Caco-2 (cell line): ENCODE measurements at regions of chrX and their contacts with region 1.

Region 1: GRCh38 chrX:119516157-119516702 is 48.0 kb downstream of the SLC25A5 start:
- DNase-seq: peak in 1 of 2 experiments; percentile 51
- H3K4me3 ChIP-seq: no peak overlapping the region
- H3K4me3 Mint-ChIP-seq: no peak overlapping the region
- H3K27ac Mint-ChIP-seq: no peak overlapping the region
- H3K4me1 ChIP-seq: no peaks in the 10 kb centered on the region
- H3K4me1 Mint-ChIP-seq: peaks cover 13% of the 10 kb centered on the region
- H3K27me3 ChIP-seq: no peaks in the 10 kb centered on the region
- H3K27me3 Mint-ChIP-seq: no peaks in the 10 kb centered on the region
- CTCF ChIP-seq: peak; percentile 59 to 79

Region 2: DNA sequence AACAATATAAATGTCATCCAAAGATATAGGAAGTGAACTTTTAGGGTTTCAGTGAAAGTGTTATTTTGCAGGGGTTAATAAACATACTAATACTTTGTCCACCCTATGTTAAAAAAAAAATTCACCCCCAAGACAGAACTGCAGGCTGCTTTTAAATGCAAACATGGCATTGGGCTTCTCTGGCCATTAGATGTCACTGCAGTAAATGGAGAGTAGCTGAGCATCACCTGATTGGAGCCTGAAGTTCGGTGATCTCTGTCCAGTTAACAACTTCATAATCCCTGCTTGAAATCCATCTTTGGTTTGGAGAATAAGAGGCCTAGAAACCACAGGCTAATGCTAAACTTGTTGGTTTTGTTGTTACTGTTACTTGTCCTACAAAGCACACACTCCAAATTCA is 98.4 kb before region 1 on chrX:
- CTCF ChIA-PET with region 1: interaction called, 16 read pairs
- POLR2A ChIA-PET with region 1: no interaction called
- intact Hi-C with region 1: loop called (anchors 2 kb)
- DNase-seq: peak in 1 of 2 experiments; percentile 11
- H3K4me3 ChIP-seq: no peak overlapping the region
- H3K4me3 Mint-ChIP-seq: no peak overlapping the region
- H3K27ac Mint-ChIP-seq: no peak overlapping the region
- H3K4me1 ChIP-seq: peaks cover 12% of the 10 kb centered on the region; the same call in 1 of the 2 replicates
- H3K4me1 Mint-ChIP-seq: peaks cover 14% of the 10 kb centered on the region
- H3K27me3 ChIP-seq: no peaks in the 10 kb centered on the region
- H3K27me3 Mint-ChIP-seq: no peaks in the 10 kb centered on the region
- CTCF ChIP-seq: peak in 1 of 2 experiments; percentile 44

Region 3: DNA sequence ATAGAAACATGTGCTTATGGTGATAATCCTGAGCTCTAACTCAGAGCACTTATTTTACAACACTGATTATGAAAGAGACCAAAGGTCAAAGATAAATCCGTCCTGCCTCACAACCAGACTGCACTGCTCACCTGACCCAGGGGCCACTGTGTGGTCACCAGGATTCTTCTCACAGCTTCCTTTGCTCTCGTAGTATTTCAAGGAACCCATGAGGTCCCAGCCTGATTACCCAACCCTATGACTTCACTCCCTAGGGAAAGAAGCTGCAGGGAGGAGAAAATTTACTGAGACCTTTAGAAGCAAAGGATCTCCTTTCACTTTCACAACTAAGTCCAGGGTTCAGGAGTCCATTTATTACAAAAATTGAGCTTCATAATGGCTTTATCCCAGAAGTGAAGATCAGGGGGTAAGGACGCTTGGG is 38.4 kb before region 1 on chrX:
- CTCF ChIA-PET with region 1: interaction called, 25 read pairs
- POLR2A ChIA-PET with region 1: interaction called, 3 read pairs
- intact Hi-C with region 1: no loop called
- DNase-seq: peak; percentile 86 to 92
- H3K4me3 ChIP-seq: no peak overlapping the region
- H3K4me3 Mint-ChIP-seq: peak overlapping the region; percentile 65
- H3K27ac Mint-ChIP-seq: peak overlapping the region; percentile 90
- H3K4me1 ChIP-seq: peaks cover 21% of the 10 kb centered on the region
- H3K4me1 Mint-ChIP-seq: peaks cover 12% of the 10 kb centered on the region
- H3K27me3 ChIP-seq: no peaks in the 10 kb centered on the region
- H3K27me3 Mint-ChIP-seq: no peaks in the 10 kb centered on the region
- CTCF ChIP-seq: no peak

Region 4: DNA sequence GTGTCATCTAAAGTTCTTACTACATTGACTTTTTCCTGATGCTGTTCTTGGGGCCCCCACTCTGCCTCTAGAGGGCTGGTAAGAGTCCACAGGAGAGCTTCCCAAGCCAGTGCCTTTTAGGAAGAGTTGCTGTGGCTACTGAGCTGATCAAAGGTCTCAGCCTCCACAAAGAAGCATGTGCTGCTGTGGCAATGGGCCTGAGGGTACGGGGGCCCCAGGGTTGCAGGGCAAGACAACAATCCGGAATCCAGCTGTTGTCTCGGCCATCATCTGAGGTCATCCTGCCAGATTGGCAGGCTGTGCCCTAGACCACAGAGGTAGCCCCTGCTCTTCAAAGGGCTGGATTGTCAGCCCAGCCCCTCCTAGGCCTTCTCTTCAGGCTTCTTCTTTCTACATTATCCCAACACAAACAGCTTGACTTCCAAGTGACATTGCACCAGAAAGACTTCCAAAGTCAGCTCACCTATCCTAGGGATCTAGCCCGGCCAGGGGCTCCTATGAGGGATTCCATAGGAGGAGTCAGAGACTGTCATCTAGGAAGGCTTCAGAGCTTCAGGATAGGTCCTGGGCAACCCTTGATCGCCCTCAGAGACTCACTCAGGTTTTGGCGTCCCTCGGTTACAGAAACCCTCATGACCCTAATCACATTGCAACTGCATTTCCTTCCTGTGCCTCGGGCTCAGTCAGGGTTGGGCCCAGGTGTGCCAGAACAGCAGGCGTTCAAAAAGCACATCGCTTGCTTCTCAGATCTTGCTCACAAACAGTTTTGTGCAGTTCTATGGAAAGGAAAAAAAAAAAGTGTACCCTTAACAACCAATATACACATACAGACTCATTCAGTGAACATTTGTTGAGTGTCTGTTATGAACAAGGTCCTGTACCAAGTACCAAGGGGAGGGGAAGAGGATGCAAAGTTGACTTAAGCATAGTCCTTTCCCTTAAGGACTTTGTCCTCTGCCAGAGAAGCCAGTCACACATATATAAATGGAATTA is 20.2 kb before region 1 on chrX:
- CTCF ChIA-PET with region 1: interaction called, 15 read pairs
- POLR2A ChIA-PET with region 1: no interaction called
- intact Hi-C with region 1: no loop called
- DNase-seq: peak; percentile 56 to 67
- H3K4me3 ChIP-seq: no peak overlapping the region
- H3K4me3 Mint-ChIP-seq: no peak overlapping the region
- H3K27ac Mint-ChIP-seq: peak overlapping the region; percentile 82
- H3K4me1 ChIP-seq: peaks cover 23% of the 10 kb centered on the region
- H3K4me1 Mint-ChIP-seq: peaks cover 15% of the 10 kb centered on the region
- H3K27me3 ChIP-seq: no peaks in the 10 kb centered on the region
- H3K27me3 Mint-ChIP-seq: no peaks in the 10 kb centered on the region
- CTCF ChIP-seq: peak in 1 of 2 experiments; percentile 21

Region 5: GRCh38 chrX:119541188-119541587 is 25.0 kb after region 1 on chrX:
- CTCF ChIA-PET with region 1: no interaction called
- POLR2A ChIA-PET with region 1: no interaction called
- intact Hi-C with region 1: no loop called
- DNase-seq: no peak
- H3K4me3 ChIP-seq: no peak overlapping the region
- H3K4me3 Mint-ChIP-seq: no peak overlapping the region
- H3K27ac Mint-ChIP-seq: no peak overlapping the region
- H3K4me1 ChIP-seq: no peaks in the 10 kb centered on the region
- H3K4me1 Mint-ChIP-seq: no peaks in the 10 kb centered on the region
- H3K27me3 ChIP-seq: no peaks in the 10 kb centered on the region
- H3K27me3 Mint-ChIP-seq: no peaks in the 10 kb centered on the region
- CTCF ChIP-seq: no peak

Region 6: GRCh38 chrX:119606280-119607015 is 90.2 kb after region 1 on chrX and contains the start of gene NKRF:
- CTCF ChIA-PET with region 1: interaction called, 4 read pairs
- POLR2A ChIA-PET with region 1: no interaction called
- intact Hi-C with region 1: loop called (anchors 10 kb)
- DNase-seq: peak; percentile 90 to 91
- H3K4me3 ChIP-seq: peak within 1 kb of the TSS; percentile 95
- H3K4me3 Mint-ChIP-seq: peak within 1 kb of the TSS; percentile 94
- H3K27ac Mint-ChIP-seq: peak within 1 kb of the TSS; percentile 94
- H3K4me1 ChIP-seq: no peaks in the 10 kb centered on the region
- H3K4me1 Mint-ChIP-seq: no peaks in the 10 kb centered on the region
- H3K27me3 ChIP-seq: no peaks in the 10 kb centered on the region
- H3K27me3 Mint-ChIP-seq: no peaks in the 10 kb centered on the region
- CTCF ChIP-seq: no peak
- total RNA-seq, gene NKRF: 14.4 and 16.6 TPM in 2 replicates

Region 7: DNA sequence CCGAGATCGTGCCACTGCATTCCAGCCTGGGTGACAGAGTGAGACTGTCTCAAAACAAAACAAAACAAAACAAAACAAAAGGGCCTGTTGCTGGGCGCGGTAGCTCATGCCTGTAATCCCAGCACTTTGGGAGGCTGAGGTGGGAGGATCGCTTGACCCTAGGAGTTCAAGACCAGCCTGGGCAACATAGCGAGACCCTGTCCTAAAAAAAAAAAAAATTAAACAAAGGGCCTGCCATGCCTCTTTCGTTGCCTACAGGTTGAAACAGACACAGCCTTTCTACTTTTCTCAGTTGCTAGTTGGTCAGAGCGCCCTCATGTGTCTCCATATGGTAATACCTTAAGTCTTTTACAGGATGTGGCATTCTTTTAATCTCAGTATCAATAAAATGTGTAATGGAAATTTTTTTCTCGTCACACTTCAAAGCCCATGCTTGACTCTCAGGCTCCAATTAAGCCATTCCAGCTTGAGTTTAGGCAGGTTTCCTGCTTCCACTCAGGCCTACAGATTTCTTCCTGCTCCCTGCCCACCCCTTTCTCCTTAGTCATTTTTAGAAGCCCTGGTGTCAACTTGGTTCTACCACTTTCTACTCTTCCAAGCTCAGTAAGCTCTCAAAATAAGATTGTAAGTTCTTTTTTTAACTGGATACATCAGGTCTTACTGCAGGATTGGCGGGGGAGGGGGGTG is 237.5 kb after region 1 on chrX:
- CTCF ChIA-PET with region 1: no interaction called
- POLR2A ChIA-PET with region 1: no interaction called
- intact Hi-C with region 1: loop called (anchors 10 kb)
- DNase-seq: peak in 1 of 2 experiments; percentile 19
- H3K4me3 ChIP-seq: no peak overlapping the region
- H3K4me3 Mint-ChIP-seq: no peak overlapping the region
- H3K27ac Mint-ChIP-seq: no peak overlapping the region
- H3K4me1 ChIP-seq: no peaks in the 10 kb centered on the region
- H3K4me1 Mint-ChIP-seq: peaks cover 13% of the 10 kb centered on the region
- H3K27me3 ChIP-seq: no peaks in the 10 kb centered on the region
- H3K27me3 Mint-ChIP-seq: no peaks in the 10 kb centered on the region
- CTCF ChIP-seq: peak in 1 of 2 experiments; percentile 3

Region 8: DNA sequence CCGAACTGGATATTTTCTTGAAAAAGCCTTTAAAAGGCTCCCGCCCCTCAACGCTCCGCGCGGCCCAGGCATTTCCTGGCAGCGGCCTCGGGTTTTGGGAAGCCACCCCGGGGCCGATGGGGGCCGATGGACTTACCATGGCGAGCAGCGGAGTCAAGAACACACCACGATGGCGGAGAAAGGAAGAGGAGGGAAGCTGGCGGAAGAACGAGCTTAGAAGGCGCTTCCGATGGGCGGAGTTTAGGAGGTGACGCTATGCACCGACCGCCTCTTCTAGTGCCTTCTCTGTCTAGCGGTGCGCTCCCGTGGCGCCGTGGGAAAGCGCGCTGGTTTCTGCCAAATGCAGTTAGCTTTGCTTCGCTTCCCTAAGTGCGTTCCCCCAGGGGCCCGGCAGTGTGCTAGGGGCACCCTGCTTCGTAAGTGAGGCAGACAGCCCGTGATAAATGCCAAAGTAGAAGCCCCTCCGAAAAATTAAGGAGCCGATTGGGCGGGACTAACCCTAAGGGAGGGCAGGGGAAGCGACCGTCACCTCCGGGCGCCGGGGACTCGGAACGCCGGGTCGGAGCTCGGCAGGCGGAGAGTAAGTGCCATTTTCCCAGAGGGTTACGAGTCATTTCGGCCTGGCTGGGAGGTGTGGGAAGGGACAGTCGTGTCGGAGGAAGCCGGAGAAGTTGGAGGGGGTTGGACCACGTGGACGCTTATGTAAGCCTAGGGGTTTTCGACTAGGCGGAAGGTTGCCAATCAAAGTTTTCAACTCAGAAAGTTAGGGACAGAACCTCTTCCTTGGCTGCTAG is 275.4 kb after region 1 on chrX and contains the start of gene RPL39:
- CTCF ChIA-PET with region 1: no interaction called
- POLR2A ChIA-PET with region 1: no interaction called
- intact Hi-C with region 1: no loop called
- DNase-seq: peak; percentile 84 to 87
- H3K4me3 ChIP-seq: peak within 1 kb of the TSS; percentile 91
- H3K4me3 Mint-ChIP-seq: peak within 1 kb of the TSS; percentile 81
- H3K27ac Mint-ChIP-seq: peak within 1 kb of the TSS; percentile 93
- H3K4me1 ChIP-seq: no peaks in the 10 kb centered on the region; the same call in 1 of the 2 replicates
- H3K4me1 Mint-ChIP-seq: no peaks in the 10 kb centered on the region
- H3K27me3 ChIP-seq: no peaks in the 10 kb centered on the region
- H3K27me3 Mint-ChIP-seq: no peaks in the 10 kb centered on the region
- CTCF ChIP-seq: no peak
- total RNA-seq, gene RPL39: 1,700 and 1,787 TPM in 2 replicates